Naive thymus-derived CD4-positive, alpha-beta T cell (primary cell): ENCODE measurements at regions of chr1 and their contacts with region 1.

Region 1: DNA sequence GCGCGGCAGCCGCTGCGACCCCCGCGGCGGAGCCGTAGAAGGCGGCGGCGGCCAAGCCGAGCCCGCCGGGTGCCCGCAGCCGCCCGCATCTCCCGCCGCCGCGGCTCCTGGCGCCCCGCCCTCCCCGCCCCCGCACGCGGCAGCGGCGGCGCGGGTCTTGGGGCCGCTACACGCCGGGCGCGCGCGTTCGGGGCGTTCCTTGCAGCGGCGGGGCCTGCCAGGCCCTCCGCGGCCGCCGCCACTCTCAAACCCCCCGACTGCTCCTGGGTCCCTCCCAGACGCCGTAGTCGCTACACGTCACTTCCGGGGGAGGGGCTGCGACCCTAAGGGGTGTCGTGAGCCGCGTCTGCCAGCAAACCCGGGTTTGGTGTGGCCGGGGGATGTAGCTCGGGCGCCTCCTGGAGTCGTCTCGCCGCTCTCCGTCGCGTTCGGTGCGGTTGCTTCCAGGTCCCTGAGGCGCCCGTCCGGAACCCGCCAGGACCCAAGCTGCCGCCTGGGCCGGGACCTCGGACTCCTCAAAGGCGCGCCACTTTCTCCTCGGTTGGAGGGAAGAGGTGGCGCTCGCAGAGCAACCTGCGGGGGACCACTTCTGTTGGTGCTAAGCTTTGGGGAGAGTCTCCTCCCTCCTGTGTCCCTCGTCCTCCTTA is at the start of gene ELK4:
- DNase-seq: peak; percentile 98 to 100 (median 99)
- ATAC-seq: peak; percentile 92
- H3K4me3 ChIP-seq: peak within 1 kb of the TSS; percentile 84
- H3K4me3 Mint-ChIP-seq: peak within 1 kb of the TSS; percentile 85 to 100 (median 94)
- H3K27ac ChIP-seq: peak within 1 kb of the TSS; percentile 95
- H3K27ac Mint-ChIP-seq: peak within 1 kb of the TSS; percentile 89 to 99 (median 97)
- H3K4me1 ChIP-seq: peaks cover 20 to 33% of the 10 kb centered on the region in 2 donors
- H3K4me1 Mint-ChIP-seq: peaks cover 23 to 51% (median 37%) of the 10 kb centered on the region in 7 donors
- H3K27me3 ChIP-seq: no peaks in the 10 kb centered on the region
- H3K27me3 Mint-ChIP-seq: peaks cover 0 to 7% (median 0%) of the 10 kb centered on the region in 5 donors
- total RNA-seq, gene ELK4: 104 to 250 (median 156) TPM

Region 2: GRCh38 chr1:205211169-205211838 is 420.5 kb before region 1 on chr1 and contains the start of gene DSTYK:
- CTCF ChIA-PET with region 1: no interaction called
- POLR2A ChIA-PET with region 1: no interaction called
- intact Hi-C with region 1: loop called (anchors 1 to 2 kb)
- DNase-seq: peak; percentile 77 to 95 (median 93)
- ATAC-seq: peak; percentile 95
- H3K4me3 ChIP-seq: peak within 1 kb of the TSS; percentile 75
- H3K4me3 Mint-ChIP-seq: peak within 1 kb of the TSS; percentile 89 to 98 (median 96)
- H3K27ac ChIP-seq: peak within 1 kb of the TSS; percentile 87
- H3K27ac Mint-ChIP-seq: peak within 1 kb of the TSS; percentile 95 to 99 (median 98)
- H3K4me1 ChIP-seq: peaks cover 8% of the 10 kb centered on the region in 2 donors
- H3K4me1 Mint-ChIP-seq: peaks cover 12 to 66% (median 54%) of the 10 kb centered on the region in 7 donors
- H3K27me3 ChIP-seq: no peaks in the 10 kb centered on the region
- H3K27me3 Mint-ChIP-seq: peaks cover 0 to 4% (median 0%) of the 10 kb centered on the region in 5 donors
- total RNA-seq, gene DSTYK: 11.3 to 18.5 (median 15.2) TPM

Region 3: GRCh38 chr1:205528887-205529825 is 102.7 kb before region 1 on chr1:
- CTCF ChIA-PET with region 1: interaction called, 9 read pairs
- POLR2A ChIA-PET with region 1: interaction called, 7 read pairs
- intact Hi-C with region 1: loop called (anchors 1 kb)
- DNase-seq: peak; percentile 58 to 90 (median 78)
- ATAC-seq: peak; percentile 82
- H3K4me3 ChIP-seq: no peak overlapping the region
- H3K4me3 Mint-ChIP-seq: peak overlapping the region in 9 of 10 donors; percentile 23 to 68 (median 62)
- H3K27ac ChIP-seq: no peak overlapping the region
- H3K27ac Mint-ChIP-seq: peak overlapping the region in 3 of 9 donors; percentile 8 to 58 (median 56)
- H3K4me1 ChIP-seq: no peaks in the 10 kb centered on the region
- H3K4me1 Mint-ChIP-seq: peaks cover 0 to 5% (median 0%) of the 10 kb centered on the region in 7 donors
- H3K27me3 ChIP-seq: no peaks in the 10 kb centered on the region
- H3K27me3 Mint-ChIP-seq: peaks cover 0 to 5% (median 0%) of the 10 kb centered on the region in 5 donors

Region 4: DNA sequence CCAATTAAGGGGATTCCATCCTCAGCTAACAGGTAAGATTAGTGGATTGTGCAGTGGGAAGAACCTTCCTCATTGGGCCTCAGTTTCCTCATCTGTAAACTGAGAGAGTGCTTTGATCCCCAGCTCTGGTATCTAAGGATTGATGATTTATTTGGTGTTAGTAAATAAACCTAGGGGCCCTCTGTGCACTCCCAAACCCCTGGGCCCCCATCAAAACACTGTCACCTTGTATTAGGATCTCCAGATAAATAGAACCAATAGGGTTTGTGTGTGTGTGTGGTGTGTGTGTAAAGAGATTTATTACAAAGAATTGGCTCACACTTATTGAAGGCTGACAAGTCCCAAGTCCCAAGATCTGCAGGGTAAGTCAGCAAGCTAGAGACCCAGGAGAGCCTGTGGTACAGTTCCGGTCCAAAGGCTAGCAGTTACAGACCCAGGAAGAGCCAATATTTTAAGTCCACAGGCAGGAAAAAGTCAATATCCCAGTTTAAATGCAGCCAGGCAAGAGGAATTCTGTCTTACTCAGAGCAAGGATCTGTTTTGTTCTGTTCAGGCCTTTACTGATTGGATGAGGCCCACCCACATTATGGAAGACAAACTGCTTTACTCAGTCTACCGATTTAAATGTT is 10.9 kb after region 1 on chr1:
- CTCF ChIA-PET with region 1: no interaction called
- POLR2A ChIA-PET with region 1: interaction called, 10 read pairs
- intact Hi-C with region 1: no loop called
- DNase-seq: no peak
- ATAC-seq: no peak
- H3K4me3 ChIP-seq: no peak overlapping the region
- H3K4me3 Mint-ChIP-seq: no peak overlapping the region
- H3K27ac ChIP-seq: no peak overlapping the region
- H3K27ac Mint-ChIP-seq: no peak overlapping the region
- H3K4me1 ChIP-seq: no peaks in the 10 kb centered on the region
- H3K4me1 Mint-ChIP-seq: no peaks in the 10 kb centered on the region
- H3K27me3 ChIP-seq: no peaks in the 10 kb centered on the region
- H3K27me3 Mint-ChIP-seq: peaks cover 0 to 31% (median 0%) of the 10 kb centered on the region in 5 donors

Region 5: GRCh38 chr1:205775015-205775716 is 143.3 kb after region 1 on chr1 and contains the start of gene RAB29:
- CTCF ChIA-PET with region 1: no interaction called
- POLR2A ChIA-PET with region 1: interaction called, 32 read pairs
- intact Hi-C with region 1: loop called (anchors 1 kb)
- DNase-seq: peak; percentile 67 to 92 (median 86)
- ATAC-seq: peak; percentile 92
- H3K4me3 ChIP-seq: peak within 1 kb of the TSS; percentile 81
- H3K4me3 Mint-ChIP-seq: peak within 1 kb of the TSS; percentile 88 to 100 (median 96)
- H3K27ac ChIP-seq: peak within 1 kb of the TSS; percentile 98
- H3K27ac Mint-ChIP-seq: peak within 1 kb of the TSS; percentile 96 to 100 (median 98)
- H3K4me1 ChIP-seq: peaks cover 17 to 24% of the 10 kb centered on the region in 2 donors
- H3K4me1 Mint-ChIP-seq: peaks cover 33 to 67% (median 60%) of the 10 kb centered on the region in 7 donors
- H3K27me3 ChIP-seq: no peaks in the 10 kb centered on the region
- H3K27me3 Mint-ChIP-seq: peaks cover 0 to 2% (median 0%) of the 10 kb centered on the region in 5 donors
- total RNA-seq, gene RAB29: 23.9 to 55.5 (median 45.9) TPM